ENCODE measurements at regions of chr13 and their contacts with region 1.

Region 1: GRCh38 chr13:40992678-40993518 is 26.2 kb downstream of the ELF1 start:
- DNase-seq: no peak
- H3K4me3 ChIP-seq: no peak overlapping the region
- H3K27ac ChIP-seq: peak overlapping the region in 24 of 59 donors; percentile 5 to 65 (median 40)
- H3K27me3 ChIP-seq: no peaks in the 10 kb centered on the region
- CTCF ChIP-seq: peak in 33 of 56 donors; percentile 12 to 54 (median 34)

Region 2: DNA sequence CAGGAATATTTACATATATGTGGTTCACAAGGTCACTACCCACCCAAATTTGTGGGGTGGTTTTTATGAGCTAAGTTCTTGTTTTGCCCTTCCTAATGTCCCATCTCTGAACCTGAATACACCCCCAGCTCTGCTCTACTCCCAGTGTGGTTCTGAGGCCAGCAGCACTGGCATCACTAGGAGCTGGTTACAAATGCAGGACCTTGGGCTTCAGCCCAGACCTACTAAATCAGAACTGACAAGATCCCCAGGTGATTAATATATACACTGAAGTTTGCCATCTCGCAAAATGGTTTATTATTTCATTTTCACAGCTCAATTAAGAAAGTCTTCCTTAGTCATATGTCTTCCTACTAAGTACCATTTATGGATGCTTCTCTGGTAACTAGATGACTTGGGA is 394.3 kb before region 1 on chr13:
- intact Hi-C with region 1: no loop called
- DNase-seq: no peak
- H3K4me3 ChIP-seq: no peak overlapping the region
- H3K27ac ChIP-seq: no peak overlapping the region
- H3K27me3 ChIP-seq: no peaks in the 10 kb centered on the region
- CTCF ChIP-seq: no peak

Region 3: GRCh38 chr13:40789275-40790133 is 203.4 kb before region 1 on chr13 and contains the start of gene SLC25A15:
- intact Hi-C with region 1: loop called in 1 of 2 experiments (anchors 5 kb)
- DNase-seq: peak in 7 of 10 donors; percentile 34 to 76 (median 48)
- H3K4me3 ChIP-seq: peak within 1 kb of the TSS; percentile 57 to 89 (median 72)
- H3K27ac ChIP-seq: peak within 1 kb of the TSS in 46 of 59 donors; percentile 4 to 82 (median 56)
- H3K27me3 ChIP-seq: no peaks in the 10 kb centered on the region
- CTCF ChIP-seq: peak in 22 of 56 donors; percentile 3 to 57 (median 28)
- total RNA-seq, gene SLC25A15: 1.8 to 9.1 (median 4.0) TPM

Measured in dorsolateral prefrontal cortex (tissue), 120 donors.